Endothelial cell of umbilical vein (primary cell): ENCODE measurements at regions of chr19 and their contacts with region 1.

Region 1: GRCh38 chr19:47514869-47515588 is at the start of gene NAPA:
- DNase-seq: peak; percentile 100
- H3K4me3 ChIP-seq: peak within 1 kb of the TSS; percentile 63 to 90 (median 83)
- H3K27ac ChIP-seq: peak within 1 kb of the TSS; percentile 85
- H3K4me1 ChIP-seq: peaks cover 22% of the 10 kb centered on the region
- H3K27me3 ChIP-seq: no peaks in the 10 kb centered on the region
- CTCF ChIP-seq: no peak
- POLR2A ChIP-seq: peak; percentile 90
- total RNA-seq, gene NAPA: 107 TPM in 2 replicates

Region 2: GRCh38 chr19:47456721-47457478 is 58.1 kb before region 1 on chr19:
- CTCF ChIA-PET with region 1: no interaction called
- POLR2A ChIA-PET with region 1: no interaction called
- dilution Hi-C with region 1: no loop called
- intact Hi-C with region 1: no loop called
- DNase-seq: no peak
- H3K4me3 ChIP-seq: no peak overlapping the region
- H3K27ac ChIP-seq: no peak overlapping the region
- H3K4me1 ChIP-seq: no peaks in the 10 kb centered on the region
- H3K27me3 ChIP-seq: peaks cover 44% of the 10 kb centered on the region in 2 experiments
- CTCF ChIP-seq: no peak
- POLR2A ChIP-seq: no peak

Region 3: DNA sequence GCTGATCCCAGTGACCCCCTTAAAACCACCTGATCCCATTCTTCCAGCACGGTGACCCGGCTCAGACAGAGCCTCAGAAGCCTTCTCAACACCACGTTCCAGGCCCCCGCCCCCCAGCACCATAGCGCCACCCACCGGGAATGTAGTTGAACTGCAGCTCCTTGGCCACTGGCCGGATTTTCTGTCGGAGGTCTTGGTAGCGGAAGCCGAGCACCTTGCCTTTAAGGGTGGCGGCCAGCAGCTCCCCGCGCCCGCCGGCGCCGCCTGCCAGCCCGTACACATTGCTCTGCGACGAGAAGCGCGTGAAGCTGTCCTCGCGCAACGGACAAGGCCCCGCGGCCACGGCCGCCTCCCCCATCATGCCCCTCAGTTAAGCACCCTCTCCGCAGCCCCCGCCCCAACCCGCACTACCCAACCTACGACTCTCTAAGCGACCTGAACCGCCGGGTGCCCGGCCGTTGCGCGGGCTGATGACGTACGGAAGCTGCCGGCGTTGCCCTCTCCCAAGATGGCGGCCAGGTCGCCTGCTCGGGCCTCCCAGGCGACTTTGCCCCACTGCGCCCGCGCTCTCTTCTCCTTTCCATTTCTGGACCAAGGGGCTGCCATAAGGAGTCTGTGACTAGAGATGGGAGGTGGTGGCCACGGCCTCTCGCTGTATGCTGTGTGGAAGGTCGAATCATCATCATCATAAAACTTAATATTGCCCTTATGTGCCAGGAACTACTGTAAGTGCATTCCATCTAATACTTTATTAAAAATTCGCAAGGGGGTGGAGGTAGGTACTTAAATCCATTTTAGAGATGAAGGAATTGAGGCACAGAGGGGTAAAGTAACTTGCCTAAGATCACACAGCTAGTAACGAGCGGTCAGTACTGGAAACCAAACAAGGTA is 31.0 kb before region 1 on chr19 and contains the start of gene KPTN:
- CTCF ChIA-PET with region 1: interaction called, 10 read pairs
- POLR2A ChIA-PET with region 1: no interaction called
- dilution Hi-C with region 1: no loop called
- intact Hi-C with region 1: loop called (anchors 1 kb)
- DNase-seq: peak; percentile 91
- H3K4me3 ChIP-seq: peak within 1 kb of the TSS; percentile 71 to 77 (median 77)
- H3K27ac ChIP-seq: peak within 1 kb of the TSS; percentile 88
- H3K4me1 ChIP-seq: peaks cover 3% of the 10 kb centered on the region
- H3K27me3 ChIP-seq: no peaks in the 10 kb centered on the region
- CTCF ChIP-seq: peak; percentile 93 to 97
- POLR2A ChIP-seq: peak; percentile 75
- total RNA-seq, gene KPTN: 13.7 and 15.5 TPM in 2 replicates

Region 4: DNA sequence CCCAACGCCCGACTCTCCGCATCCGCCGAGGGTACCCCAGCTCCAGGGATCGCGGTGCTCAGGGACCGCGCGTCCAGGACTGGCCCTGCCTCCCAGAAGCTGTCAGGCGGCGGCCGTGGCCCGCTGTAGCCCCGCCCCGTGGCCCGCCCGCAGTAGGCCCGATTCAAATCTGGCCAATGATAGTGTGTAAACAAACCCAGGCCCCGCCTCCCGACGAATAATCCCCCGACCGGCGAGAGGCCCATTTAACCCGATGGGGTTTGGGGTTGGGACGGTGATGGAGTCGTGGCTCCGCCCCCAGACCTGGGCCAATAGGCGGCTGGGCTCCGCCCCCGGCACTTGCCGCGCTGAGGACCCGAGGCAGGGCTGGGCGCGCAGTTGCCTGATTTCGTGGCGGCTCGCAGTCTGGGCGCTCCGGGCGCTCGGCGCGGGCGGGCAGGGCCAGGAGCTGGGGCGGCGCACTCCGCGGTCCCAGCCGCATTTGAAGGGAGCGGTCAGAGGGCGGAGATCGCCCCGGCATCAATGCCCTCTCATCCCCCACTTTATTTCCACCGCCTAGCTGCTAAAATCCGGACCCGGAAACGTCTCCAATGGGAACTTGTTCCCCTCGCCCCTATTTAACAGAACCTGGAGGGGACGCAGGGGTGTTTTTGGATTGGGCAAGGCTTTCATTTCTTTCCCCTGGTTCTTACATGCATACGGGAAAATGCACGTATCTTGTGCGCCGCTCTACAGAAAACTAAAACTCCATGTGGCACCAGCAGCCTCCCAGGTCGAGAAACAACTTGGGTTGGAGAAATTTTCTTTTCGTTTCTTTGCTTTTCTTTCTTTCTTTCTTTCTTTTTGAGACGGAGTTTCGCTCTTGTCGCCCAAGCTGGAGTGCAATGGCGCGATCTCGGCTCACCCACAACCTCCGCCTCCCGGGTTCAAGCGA is 85.5 kb after region 1 on chr19:
- CTCF ChIA-PET with region 1: interaction called, 20 read pairs
- POLR2A ChIA-PET with region 1: interaction called, 6 read pairs
- dilution Hi-C with region 1: no loop called
- intact Hi-C with region 1: loop called (anchors 1 kb)
- DNase-seq: peak; percentile 99
- H3K4me3 ChIP-seq: peak overlapping the region; percentile 53 to 74 (median 66)
- H3K27ac ChIP-seq: peak overlapping the region; percentile 67
- H3K4me1 ChIP-seq: peaks cover 29% of the 10 kb centered on the region
- H3K27me3 ChIP-seq: no peaks in the 10 kb centered on the region
- CTCF ChIP-seq: no peak
- POLR2A ChIP-seq: peak; percentile 92

Region 5: GRCh38 chr19:47608074-47608918 is 93.3 kb after region 1 on chr19:
- CTCF ChIA-PET with region 1: interaction called, 18 read pairs
- POLR2A ChIA-PET with region 1: no interaction called
- dilution Hi-C with region 1: no loop called
- intact Hi-C with region 1: loop called (anchors 1 kb)
- DNase-seq: peak; percentile 90
- H3K4me3 ChIP-seq: peak overlapping the region; percentile 67 to 92 (median 91)
- H3K27ac ChIP-seq: peak overlapping the region; percentile 90
- H3K4me1 ChIP-seq: peaks cover 25% of the 10 kb centered on the region
- H3K27me3 ChIP-seq: no peaks in the 10 kb centered on the region
- CTCF ChIP-seq: peak; percentile 22 to 46
- POLR2A ChIP-seq: peak; percentile 64

Region 6: DNA sequence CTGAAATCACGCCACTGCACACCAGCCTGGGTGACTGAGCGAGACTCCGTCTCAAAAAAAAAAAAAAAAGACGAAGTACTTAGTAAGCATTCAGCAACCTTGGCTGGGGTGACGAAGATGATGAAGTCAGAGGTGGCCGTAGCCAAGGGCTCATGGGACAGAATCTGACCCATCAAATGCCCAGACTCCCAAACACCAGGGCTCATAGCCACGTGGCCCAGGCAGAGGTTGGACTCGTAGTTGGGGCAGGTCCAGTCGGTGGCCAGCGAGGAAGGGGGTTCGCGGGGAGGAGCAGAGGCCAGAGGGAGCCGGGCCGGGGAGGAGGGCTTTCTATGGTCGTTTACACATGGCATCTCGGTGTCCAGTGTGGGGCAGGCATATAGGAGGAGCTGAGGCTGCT is 146.1 kb after region 1 on chr19:
- CTCF ChIA-PET with region 1: no interaction called
- POLR2A ChIA-PET with region 1: no interaction called
- dilution Hi-C with region 1: no loop called
- intact Hi-C with region 1: no loop called
- DNase-seq: no peak
- H3K4me3 ChIP-seq: no peak overlapping the region
- H3K27ac ChIP-seq: no peak overlapping the region
- H3K4me1 ChIP-seq: peaks cover 2% of the 10 kb centered on the region
- H3K27me3 ChIP-seq: no peaks in the 10 kb centered on the region
- CTCF ChIP-seq: no peak
- POLR2A ChIP-seq: no peak

Region 7: GRCh38 chr19:47675684-47676258 is 160.7 kb after region 1 on chr19:
- CTCF ChIA-PET with region 1: no interaction called
- POLR2A ChIA-PET with region 1: no interaction called
- dilution Hi-C with region 1: no loop called
- intact Hi-C with region 1: no loop called
- DNase-seq: no peak
- H3K4me3 ChIP-seq: no peak overlapping the region
- H3K27ac ChIP-seq: no peak overlapping the region
- H3K4me1 ChIP-seq: no peaks in the 10 kb centered on the region
- H3K27me3 ChIP-seq: no peaks in the 10 kb centered on the region
- CTCF ChIP-seq: no peak
- POLR2A ChIP-seq: no peak

Region 8: GRCh38 chr19:47697863-47698609 is 183.0 kb after region 1 on chr19:
- CTCF ChIA-PET with region 1: interaction called, 8 read pairs
- POLR2A ChIA-PET with region 1: no interaction called
- dilution Hi-C with region 1: no loop called
- intact Hi-C with region 1: loop called (anchors 1 kb)
- DNase-seq: peak; percentile 79
- H3K4me3 ChIP-seq: no peak overlapping the region
- H3K27ac ChIP-seq: no peak overlapping the region
- H3K4me1 ChIP-seq: no peaks in the 10 kb centered on the region
- H3K27me3 ChIP-seq: no peaks in the 10 kb centered on the region
- CTCF ChIP-seq: peak; percentile 97 to 99
- POLR2A ChIP-seq: no peak

Region 9: GRCh38 chr19:47745010-47745901 is 230.2 kb after region 1 on chr19 and contains the start of gene NOP53:
- CTCF ChIA-PET with region 1: no interaction called
- POLR2A ChIA-PET with region 1: no interaction called
- dilution Hi-C with region 1: no loop called
- intact Hi-C with region 1: loop called (anchors 1 kb)
- DNase-seq: peak; percentile 98
- H3K4me3 ChIP-seq: peak within 1 kb of the TSS; percentile 66 to 87 (median 80)
- H3K27ac ChIP-seq: peak within 1 kb of the TSS; percentile 78
- H3K4me1 ChIP-seq: peaks cover 21% of the 10 kb centered on the region
- H3K27me3 ChIP-seq: no peaks in the 10 kb centered on the region
- CTCF ChIP-seq: no peak
- POLR2A ChIP-seq: peak; percentile 85
- total RNA-seq, gene NOP53: 150 and 189 TPM in 2 replicates